ENCODE measurements at regions of chr6 and their contacts with region 1.

Region 1: GRCh38 chr6:133916650-133917151 is 27.8 kb downstream of the TCF21 start:
- DNase-seq: peak; percentile 89
- H3K4me3 Mint-ChIP-seq: no peak overlapping the region
- H3K27ac Mint-ChIP-seq: no peak overlapping the region
- H3K4me1 Mint-ChIP-seq: peaks cover 14% of the 10 kb centered on the region
- H3K27me3 Mint-ChIP-seq: no peaks in the 10 kb centered on the region
- CTCF ChIP-seq: peak; percentile 87

Region 2: GRCh38 chr6:133587546-133588160 is 329.0 kb before region 1 on chr6:
- CTCF ChIA-PET with region 1: interaction called, 32 read pairs
- POLR2A ChIA-PET with region 1: no interaction called
- intact Hi-C with region 1: no loop called
- DNase-seq: no peak
- H3K4me3 Mint-ChIP-seq: no peak overlapping the region
- H3K27ac Mint-ChIP-seq: no peak overlapping the region
- H3K4me1 Mint-ChIP-seq: peaks cover 26% of the 10 kb centered on the region
- H3K27me3 Mint-ChIP-seq: no peaks in the 10 kb centered on the region
- CTCF ChIP-seq: no peak

Region 3: GRCh38 chr6:133707456-133707855 is 209.2 kb before region 1 on chr6:
- CTCF ChIA-PET with region 1: interaction called, 5 read pairs
- POLR2A ChIA-PET with region 1: interaction called, 4 read pairs
- intact Hi-C with region 1: loop called (anchors 5 kb)
- DNase-seq: peak; percentile 28
- H3K4me3 Mint-ChIP-seq: no peak overlapping the region
- H3K27ac Mint-ChIP-seq: peak overlapping the region; percentile 69
- H3K4me1 Mint-ChIP-seq: peaks cover 35% of the 10 kb centered on the region
- H3K27me3 Mint-ChIP-seq: no peaks in the 10 kb centered on the region
- CTCF ChIP-seq: no peak

Region 4: GRCh38 chr6:133895573-133896343 is 20.9 kb before region 1 on chr6:
- CTCF ChIA-PET with region 1: interaction called, 16 read pairs
- POLR2A ChIA-PET with region 1: no interaction called
- intact Hi-C with region 1: no loop called
- DNase-seq: no peak
- H3K4me3 Mint-ChIP-seq: no peak overlapping the region
- H3K27ac Mint-ChIP-seq: no peak overlapping the region
- H3K4me1 Mint-ChIP-seq: peaks cover 14% of the 10 kb centered on the region
- H3K27me3 Mint-ChIP-seq: no peaks in the 10 kb centered on the region
- CTCF ChIP-seq: no peak